ENCODE measurements at regions of chr10 and their contacts with region 1.

Region 1: GRCh38 chr10:80205478-80206276 is at the start of gene ANXA11:
- DNase-seq: peak; percentile 72 to 92 (median 84)
- ATAC-seq: peak; percentile 83 to 84
- H3K4me3 Mint-ChIP-seq: peak within 1 kb of the TSS; percentile 80 to 99 (median 96)
- H3K27ac Mint-ChIP-seq: peak within 1 kb of the TSS; percentile 93 to 98 (median 97)
- H3K4me1 Mint-ChIP-seq: peaks cover 37 to 60% (median 52%) of the 10 kb centered on the region in 4 donors
- H3K27me3 Mint-ChIP-seq: no peaks in the 10 kb centered on the region
- polyA plus RNA-seq, gene ANXA11: 199 to 294 (median 265) TPM

Region 2: DNA sequence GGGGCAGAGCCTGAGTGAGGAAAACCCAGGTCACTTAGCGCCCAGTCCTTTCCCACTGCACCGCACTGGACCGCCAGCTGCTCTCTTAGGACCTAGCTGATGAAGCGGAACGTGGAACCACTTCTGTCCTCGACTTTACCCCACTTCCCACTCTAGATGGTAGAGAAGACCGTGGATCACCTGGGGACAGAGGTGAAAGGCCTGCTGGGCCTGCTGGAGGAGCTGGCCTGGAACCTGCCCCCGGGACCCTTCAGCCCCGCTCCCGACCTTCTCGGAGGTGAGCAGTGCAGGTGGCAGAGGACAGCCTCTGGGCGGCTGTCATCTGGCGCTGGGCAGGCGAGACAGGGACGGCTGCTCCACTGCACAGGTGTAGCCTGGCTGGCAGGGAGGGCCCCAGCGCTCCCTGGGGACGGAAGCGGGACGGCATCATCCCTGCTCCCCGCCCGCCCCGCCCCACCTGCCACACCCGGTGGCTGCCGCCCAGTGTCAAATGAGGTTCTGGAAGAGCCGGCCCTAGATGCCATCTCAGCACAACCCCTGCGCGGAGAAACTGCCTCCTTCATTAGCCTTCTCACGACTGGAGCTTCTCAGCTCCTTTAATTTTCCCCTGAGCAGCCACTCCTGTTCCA is 61.5 kb before region 1 on chr10:
- POLR2A ChIA-PET with region 1: interaction called, 40 read pairs
- DNase-seq: peak in 4 of 10 donors; percentile 4 to 33 (median 17)
- ATAC-seq: peak; percentile 56 to 67
- H3K4me3 Mint-ChIP-seq: peak overlapping the region; percentile 79 to 93 (median 86)
- H3K27ac Mint-ChIP-seq: peak overlapping the region; percentile 78 to 96 (median 90)
- H3K4me1 Mint-ChIP-seq: peaks cover 15 to 24% (median 20%) of the 10 kb centered on the region in 4 donors
- H3K27me3 Mint-ChIP-seq: peaks cover 0 to 16% (median 4%) of the 10 kb centered on the region in 5 donors

Region 3: GRCh38 chr10:80173466-80173865 is 32.2 kb before region 1 on chr10:
- POLR2A ChIA-PET with region 1: no interaction called
- DNase-seq: peak in 1 of 10 donors; percentile 56
- ATAC-seq: no peak
- H3K4me3 Mint-ChIP-seq: no peak overlapping the region
- H3K27ac Mint-ChIP-seq: peak overlapping the region in 9 of 10 donors; percentile 13 to 83 (median 65)
- H3K4me1 Mint-ChIP-seq: peaks cover 30 to 73% (median 46%) of the 10 kb centered on the region in 4 donors
- H3K27me3 Mint-ChIP-seq: no peaks in the 10 kb centered on the region

Region 4: GRCh38 chr10:80187465-80188409 is 17.9 kb before region 1 on chr10:
- POLR2A ChIA-PET with region 1: interaction called, 232 read pairs
- DNase-seq: peak; percentile 66 to 97 (median 87)
- ATAC-seq: peak; percentile 91 to 93
- H3K4me3 Mint-ChIP-seq: peak overlapping the region; percentile 68 to 92 (median 78)
- H3K27ac Mint-ChIP-seq: peak overlapping the region; percentile 93 to 98 (median 96)
- H3K4me1 Mint-ChIP-seq: peaks cover 46 to 92% (median 89%) of the 10 kb centered on the region in 4 donors
- H3K27me3 Mint-ChIP-seq: no peaks in the 10 kb centered on the region